ENCODE measurements at regions of chr9 and their contacts with region 1.

Region 1: DNA sequence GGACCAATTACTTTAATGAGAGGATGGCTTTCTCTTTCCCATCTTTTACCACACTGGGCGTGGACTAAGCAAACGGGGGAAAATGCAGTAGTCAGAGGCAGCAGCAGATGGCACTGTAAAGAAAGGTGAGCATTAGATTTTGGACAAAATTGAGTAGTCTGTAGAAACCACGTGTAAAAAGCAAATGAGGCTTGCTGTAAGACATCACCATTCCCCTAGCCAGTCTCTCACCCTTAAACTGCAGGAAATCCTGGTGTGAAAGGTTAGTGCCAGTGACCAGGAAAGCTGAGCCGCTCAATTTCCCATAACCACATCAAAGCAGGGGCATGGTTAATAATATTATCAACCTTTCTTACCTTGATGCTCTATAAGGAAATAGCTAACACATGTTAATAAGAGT is 31.8 kb downstream of the SPATA31C2 start:
- DNase-seq: peak in 3 of 5 donors; percentile 44 to 74 (median 54)
- H3K4me3 ChIP-seq: no peak overlapping the region
- H3K27ac ChIP-seq: no peak overlapping the region
- H3K4me1 ChIP-seq: no peaks in the 10 kb centered on the region
- H3K27me3 ChIP-seq: no peaks in the 10 kb centered on the region
- CTCF ChIP-seq: peak; percentile 72

Region 2: DNA sequence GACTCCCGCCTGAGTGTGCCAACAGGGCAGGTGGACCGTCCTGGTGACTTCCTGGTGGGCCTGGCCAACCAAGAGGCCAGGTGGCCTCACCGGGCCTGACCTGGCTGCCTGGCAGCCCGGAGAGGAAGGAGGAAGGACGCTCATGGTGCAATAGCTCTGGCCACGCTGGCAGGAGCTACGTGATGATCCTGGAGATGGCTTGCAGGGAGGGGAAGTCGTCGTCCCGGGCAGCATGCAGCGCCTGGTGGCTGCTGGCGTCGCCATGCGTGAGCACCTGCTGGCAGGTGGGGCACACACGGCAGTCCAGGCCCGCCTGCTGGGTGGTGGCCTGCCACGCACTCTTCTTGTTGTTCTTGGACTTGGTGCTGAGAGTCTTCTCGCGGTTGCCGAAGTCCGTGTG is 162.4 kb before region 1 on chr9:
- intact Hi-C with region 1: loop called (anchors 10 kb)
- DNase-seq: no peak
- H3K4me3 ChIP-seq: no peak overlapping the region
- H3K27ac ChIP-seq: no peak overlapping the region
- H3K4me1 ChIP-seq: no peaks in the 10 kb centered on the region
- H3K27me3 ChIP-seq: no peaks in the 10 kb centered on the region
- CTCF ChIP-seq: no peak

Region 3: GRCh38 chr9:88072851-88073365 is 33.6 kb before region 1 on chr9:
- intact Hi-C with region 1: no loop called
- DNase-seq: no peak
- H3K4me3 ChIP-seq: no peak overlapping the region
- H3K27ac ChIP-seq: no peak overlapping the region
- H3K4me1 ChIP-seq: peaks cover 0 to 7% (median 0%) of the 10 kb centered on the region in 3 donors
- H3K27me3 ChIP-seq: no peaks in the 10 kb centered on the region
- CTCF ChIP-seq: no peak

Region 4: DNA sequence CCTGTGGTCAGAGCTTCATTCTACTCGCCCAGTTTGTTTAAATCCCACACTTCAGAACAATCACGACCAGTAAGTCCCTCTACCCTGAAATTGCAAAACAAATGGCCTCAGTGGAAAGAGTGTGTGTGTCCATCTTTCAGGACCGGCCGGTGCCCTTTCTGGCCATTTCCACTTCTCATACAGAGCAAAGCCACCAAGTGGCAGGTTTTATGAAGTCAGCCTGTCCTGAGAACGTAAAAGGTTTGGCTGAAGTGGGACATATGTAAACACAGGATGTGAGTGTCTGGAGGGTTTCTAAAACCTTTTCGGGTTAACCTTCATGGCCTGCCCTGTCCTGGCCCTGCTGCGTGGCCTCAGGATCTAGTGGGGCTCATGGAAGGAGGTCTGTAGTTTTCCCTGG is 453.2 kb after region 1 on chr9:
- intact Hi-C with region 1: no loop called
- DNase-seq: peak in 1 of 5 donors; percentile 9
- H3K4me3 ChIP-seq: no peak overlapping the region
- H3K27ac ChIP-seq: no peak overlapping the region
- H3K4me1 ChIP-seq: no peaks in the 10 kb centered on the region
- H3K27me3 ChIP-seq: no peaks in the 10 kb centered on the region
- CTCF ChIP-seq: peak; percentile 9

Region 5: GRCh38 chr9:88578121-88579054 is 471.9 kb after region 1 on chr9:
- intact Hi-C with region 1: loop called (anchors 10 kb)
- DNase-seq: peak; percentile 86 to 92 (median 89)
- H3K4me3 ChIP-seq: peak overlapping the region in 1 of 3 donors; percentile 6
- H3K27ac ChIP-seq: no peak overlapping the region
- H3K4me1 ChIP-seq: no peaks in the 10 kb centered on the region
- H3K27me3 ChIP-seq: no peaks in the 10 kb centered on the region
- CTCF ChIP-seq: peak; percentile 97

Measured in kidney (tissue), 22 donors.